ENCODE measurements at regions of chr19 and their contacts with region 1.

Region 1: DNA sequence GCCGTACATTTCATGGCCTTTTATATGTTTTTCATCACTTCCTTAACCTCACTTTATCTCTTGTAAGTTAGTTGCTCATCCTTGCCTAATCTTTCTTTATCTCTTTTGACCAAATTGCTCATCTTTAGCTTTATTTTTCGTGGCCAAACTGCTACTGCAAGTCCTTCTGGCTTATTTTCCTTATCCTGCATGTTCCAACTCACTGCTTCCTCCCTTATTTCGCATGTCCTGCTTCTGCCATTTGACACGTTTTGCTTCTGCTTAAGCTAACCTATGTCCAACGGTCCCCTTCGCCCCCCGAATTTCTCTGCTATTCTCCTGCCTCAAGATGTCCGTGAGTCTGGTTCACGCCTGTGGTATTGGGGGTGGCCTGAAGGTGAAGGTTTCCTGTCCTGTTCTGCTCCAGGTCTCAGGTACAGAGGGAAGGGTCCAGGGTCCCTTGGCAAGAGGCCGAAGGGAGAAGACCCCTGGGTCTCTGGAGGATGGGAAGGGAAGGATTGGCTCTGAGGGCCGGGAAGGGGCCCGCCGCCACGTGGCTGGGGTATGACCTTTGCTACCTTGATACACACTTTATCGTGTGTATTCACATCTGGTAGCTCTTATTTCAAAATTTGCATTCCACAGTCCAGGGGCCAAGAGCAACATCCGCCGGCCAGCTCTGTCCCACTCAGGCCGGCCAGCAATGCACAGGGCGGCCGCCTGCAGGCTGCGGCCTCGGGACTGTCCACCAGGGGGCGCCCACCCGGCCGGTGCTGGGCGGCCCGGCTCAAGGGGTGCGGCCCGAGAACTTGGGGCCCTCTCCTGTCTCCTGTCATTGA is 2.9 kb upstream of the C19orf85 start:
- DNase-seq: no peak
- H3K4me3 ChIP-seq: no peak overlapping the region
- H3K27ac ChIP-seq: no peak overlapping the region
- H3K4me1 ChIP-seq: no peaks in the 10 kb centered on the region
- H3K27me3 ChIP-seq: no peaks in the 10 kb centered on the region
- CTCF ChIP-seq: peak; percentile 99

Region 2: DNA sequence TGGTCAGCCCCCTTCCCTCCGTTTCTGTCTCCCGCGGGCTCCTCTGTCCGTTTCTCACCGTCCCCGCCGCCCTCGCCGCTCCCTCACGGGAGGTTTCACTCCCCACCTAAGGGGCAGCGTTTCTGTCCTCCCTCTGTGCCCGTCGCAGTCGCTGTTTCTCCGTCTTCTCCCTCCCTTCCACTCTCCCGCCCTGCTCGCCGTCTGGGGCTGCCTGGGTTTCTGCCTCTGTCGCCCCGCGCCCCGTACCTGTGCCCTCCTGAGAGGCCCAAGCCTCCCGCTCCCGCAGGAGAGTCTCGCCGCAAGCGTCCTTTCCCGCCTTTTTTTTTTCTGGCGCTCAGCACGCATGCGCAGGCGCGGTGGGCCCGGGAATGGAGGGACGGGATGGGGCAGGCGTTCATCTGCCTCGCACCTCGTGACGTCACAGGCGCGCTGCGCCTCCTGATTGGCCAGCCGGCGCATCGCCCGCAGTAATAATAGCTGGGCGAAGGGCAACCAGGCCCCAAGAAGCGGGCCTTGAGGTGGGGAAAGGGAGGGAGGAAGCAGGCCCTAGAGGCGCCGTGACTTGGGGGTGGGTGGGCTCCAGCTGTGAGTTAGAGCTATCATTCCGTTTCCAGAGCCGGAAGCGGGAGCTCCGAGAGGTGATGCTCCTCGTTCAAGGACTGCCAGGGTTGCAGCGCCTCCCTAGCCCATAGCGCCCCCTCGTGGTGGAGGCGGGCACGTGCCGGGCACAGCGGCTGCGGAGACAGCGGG is 36.2 kb after region 1 on chr19:
- CTCF ChIA-PET with region 1: interaction called, 7 read pairs
- POLR2A ChIA-PET with region 1: interaction called, 13 read pairs
- intact Hi-C with region 1: loop called (anchors 5 kb)
- DNase-seq: peak; percentile 90
- H3K4me3 ChIP-seq: no peak overlapping the region
- H3K27ac ChIP-seq: no peak overlapping the region
- H3K4me1 ChIP-seq: no peaks in the 10 kb centered on the region
- H3K27me3 ChIP-seq: no peaks in the 10 kb centered on the region
- CTCF ChIP-seq: peak; percentile 97

Measured in A673 (cell line).